Heart left ventricle (tissue), 16 donors: ENCODE measurements at regions of chr6 and their contacts with region 1.

Region 1: GRCh38 chr6:54020334-54020733 is 90.9 kb upstream of the MLIP start:
- DNase-seq: no peak
- ATAC-seq: peak in 1 of 4 donors; percentile 17
- H3K4me3 ChIP-seq: peak overlapping the region; percentile 19 to 59 (median 48)
- H3K27ac ChIP-seq: peak overlapping the region; percentile 69 to 93 (median 80)
- H3K4me1 ChIP-seq: peaks cover 0 to 9% (median 0%) of the 10 kb centered on the region in 12 donors
- H3K27me3 ChIP-seq: no peaks in the 10 kb centered on the region
- CTCF ChIP-seq: no peak
- POLR2A ChIP-seq: no peak

Region 2: GRCh38 chr6:54053881-54054391 is 33.6 kb after region 1 on chr6:
- intact Hi-C with region 1: loop called in 2 of 10 experiments (anchors 5 kb)
- DNase-seq: peak in 3 of 5 donors; percentile 39 to 55 (median 40)
- ATAC-seq: peak; percentile 88 to 95 (median 94)
- H3K4me3 ChIP-seq: peak overlapping the region in 8 of 12 donors; percentile 2 to 34 (median 22)
- H3K27ac ChIP-seq: peak overlapping the region; percentile 60 to 86 (median 71)
- H3K4me1 ChIP-seq: peaks cover 0 to 46% (median 10%) of the 10 kb centered on the region in 12 donors
- H3K27me3 ChIP-seq: no peaks in the 10 kb centered on the region
- CTCF ChIP-seq: no peak
- POLR2A ChIP-seq: no peak

Region 3: GRCh38 chr6:54060286-54060685 is 40.0 kb after region 1 on chr6:
- intact Hi-C with region 1: loop called in 1 of 10 experiments (anchors 5 kb)
- DNase-seq: no peak
- ATAC-seq: peak in 2 of 4 donors; percentile 55 to 57
- H3K4me3 ChIP-seq: no peak overlapping the region
- H3K27ac ChIP-seq: peak overlapping the region in 9 of 12 donors; percentile 3 to 78 (median 66)
- H3K4me1 ChIP-seq: peaks cover 0 to 55% (median 26%) of the 10 kb centered on the region in 12 donors
- H3K27me3 ChIP-seq: no peaks in the 10 kb centered on the region
- CTCF ChIP-seq: no peak
- POLR2A ChIP-seq: no peak

Region 4: GRCh38 chr6:54074578-54075195 is 54.4 kb after region 1 on chr6:
- intact Hi-C with region 1: loop called in 1 of 10 experiments (anchors 10 kb)
- DNase-seq: peak; percentile 21 to 52 (median 34)
- ATAC-seq: peak; percentile 33 to 72 (median 55)
- H3K4me3 ChIP-seq: no peak overlapping the region
- H3K27ac ChIP-seq: peak overlapping the region in 4 of 12 donors; percentile 9 to 31 (median 22)
- H3K4me1 ChIP-seq: peaks cover 0 to 80% (median 40%) of the 10 kb centered on the region in 12 donors
- H3K27me3 ChIP-seq: no peaks in the 10 kb centered on the region
- CTCF ChIP-seq: no peak
- POLR2A ChIP-seq: no peak